B cell (primary cell): ENCODE measurements at regions of chr19 and their contacts with region 1.

Region 1: GRCh38 chr19:41353466-41354342 is at the start of gene TGFB1:
- DNase-seq: peak; percentile 97
- ATAC-seq: peak; percentile 72
- H3K4me3 ChIP-seq: peak within 1 kb of the TSS; percentile 67 to 100 (median 92)
- H3K4me3 Mint-ChIP-seq: peak within 1 kb of the TSS; percentile 93
- H3K27ac ChIP-seq: peak within 1 kb of the TSS; percentile 79 to 91
- H3K27ac Mint-ChIP-seq: peak within 1 kb of the TSS; percentile 92
- H3K4me1 ChIP-seq: peaks cover 26 to 30% of the 10 kb centered on the region in 2 donors
- H3K4me1 Mint-ChIP-seq: peaks cover 44% of the 10 kb centered on the region
- H3K27me3 ChIP-seq: no peaks in the 10 kb centered on the region
- H3K27me3 Mint-ChIP-seq: no peaks in the 10 kb centered on the region
- CTCF ChIP-seq: peak; percentile 84
- total RNA-seq, gene TGFB1: 120 TPM in 2 replicates

Region 2: DNA sequence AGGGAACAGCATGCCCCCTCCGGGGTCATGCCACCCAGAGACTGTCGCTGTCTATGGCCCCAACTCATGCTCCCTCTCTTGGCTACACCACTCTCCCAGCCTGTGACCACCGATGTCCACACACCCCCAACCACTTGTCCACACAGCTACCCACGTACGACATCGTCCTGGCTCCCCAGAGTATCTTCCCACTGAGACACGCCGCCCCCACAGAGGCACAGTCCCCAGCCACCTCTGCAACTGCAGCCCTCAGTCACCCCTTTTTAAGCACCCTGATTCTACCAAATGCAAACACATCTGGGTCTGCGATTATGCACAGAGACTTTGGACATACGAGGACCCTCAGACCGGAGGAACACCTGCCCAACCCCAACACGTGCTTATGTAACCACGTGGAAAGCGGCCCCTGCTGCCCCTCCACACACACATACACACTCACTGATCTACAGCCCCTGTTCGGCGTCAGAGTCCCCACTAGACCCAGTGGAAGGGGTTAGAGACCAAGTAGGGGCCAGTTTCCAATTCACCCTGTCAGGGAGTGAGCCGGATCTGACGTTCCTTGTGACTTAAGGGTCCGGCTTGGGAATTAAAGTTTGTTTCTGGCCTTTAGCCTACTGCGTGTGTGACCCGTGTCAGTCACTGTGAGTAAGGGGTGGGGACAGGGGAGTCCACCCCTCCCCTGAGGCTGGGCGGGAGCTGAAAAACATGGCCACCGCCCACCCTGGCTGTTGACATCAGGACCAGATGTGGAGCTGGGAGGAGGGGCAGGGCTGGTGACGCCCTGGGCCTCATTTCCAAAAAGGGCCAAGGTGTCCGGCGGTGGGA is 146.6 kb before region 1 on chr19:
- CTCF ChIA-PET with region 1: interaction called, 15 read pairs
- POLR2A ChIA-PET with region 1: interaction called, 8 read pairs
- intact Hi-C with region 1: no loop called
- DNase-seq: no peak
- ATAC-seq: no peak
- H3K4me3 ChIP-seq: no peak overlapping the region
- H3K4me3 Mint-ChIP-seq: no peak overlapping the region
- H3K27ac ChIP-seq: no peak overlapping the region
- H3K27ac Mint-ChIP-seq: no peak overlapping the region
- H3K4me1 ChIP-seq: no peaks in the 10 kb centered on the region
- H3K4me1 Mint-ChIP-seq: no peaks in the 10 kb centered on the region
- H3K27me3 ChIP-seq: no peaks in the 10 kb centered on the region
- H3K27me3 Mint-ChIP-seq: no peaks in the 10 kb centered on the region
- CTCF ChIP-seq: no peak

Region 3: GRCh38 chr19:41298348-41298964 is 55.2 kb before region 1 on chr19:
- CTCF ChIA-PET with region 1: interaction called, 7 read pairs
- POLR2A ChIA-PET with region 1: interaction called, 12 read pairs
- intact Hi-C with region 1: loop called (anchors 1 kb)
- DNase-seq: peak; percentile 85
- ATAC-seq: peak; percentile 25
- H3K4me3 ChIP-seq: no peak overlapping the region
- H3K4me3 Mint-ChIP-seq: peak overlapping the region; percentile 86
- H3K27ac ChIP-seq: peak overlapping the region; percentile 83 to 100
- H3K27ac Mint-ChIP-seq: peak overlapping the region; percentile 98
- H3K4me1 ChIP-seq: peaks cover 58 to 65% of the 10 kb centered on the region in 2 donors
- H3K4me1 Mint-ChIP-seq: peaks cover 71% of the 10 kb centered on the region
- H3K27me3 ChIP-seq: no peaks in the 10 kb centered on the region
- H3K27me3 Mint-ChIP-seq: no peaks in the 10 kb centered on the region
- CTCF ChIP-seq: no peak

Region 4: DNA sequence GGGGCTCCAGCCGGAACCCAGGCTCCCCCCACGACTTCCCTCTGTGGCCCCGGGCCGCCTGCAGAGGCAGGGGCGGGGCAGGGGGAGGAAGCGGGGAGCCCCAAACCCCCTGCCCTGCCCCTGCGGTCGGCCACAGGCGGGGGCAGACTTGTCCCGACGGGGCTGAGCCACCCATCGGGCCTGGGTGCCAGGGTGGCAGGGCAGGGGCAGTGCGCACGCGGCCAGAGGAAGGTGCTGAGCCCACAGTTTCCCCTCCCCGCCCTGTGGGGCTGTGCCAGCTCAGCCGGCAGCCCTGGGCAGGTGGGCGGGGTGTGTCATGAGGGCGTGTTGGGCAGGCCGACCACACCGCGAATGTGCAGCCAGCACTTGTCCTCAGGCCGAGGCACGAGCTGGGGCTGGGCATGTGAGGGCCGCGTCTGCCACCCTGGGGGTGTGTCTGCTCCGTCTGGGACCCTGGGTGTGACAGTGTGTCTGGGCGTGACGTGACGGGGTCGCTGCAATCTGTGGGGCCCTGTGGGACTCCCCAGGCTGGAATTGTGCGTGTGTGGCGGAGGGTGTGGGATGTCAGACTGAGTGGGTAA is 26.0 kb before region 1 on chr19:
- CTCF ChIA-PET with region 1: interaction called, 130 read pairs
- POLR2A ChIA-PET with region 1: interaction called, 69 read pairs
- intact Hi-C with region 1: loop called (anchors 1 kb)
- DNase-seq: peak; percentile 90
- ATAC-seq: peak; percentile 78
- H3K4me3 ChIP-seq: peak overlapping the region; percentile 8 to 72 (median 39)
- H3K4me3 Mint-ChIP-seq: peak overlapping the region; percentile 88
- H3K27ac ChIP-seq: peak overlapping the region; percentile 76 to 97
- H3K27ac Mint-ChIP-seq: peak overlapping the region; percentile 98
- H3K4me1 ChIP-seq: peaks cover 59 to 80% of the 10 kb centered on the region in 2 donors
- H3K4me1 Mint-ChIP-seq: peaks cover 72% of the 10 kb centered on the region
- H3K27me3 ChIP-seq: no peaks in the 10 kb centered on the region
- H3K27me3 Mint-ChIP-seq: no peaks in the 10 kb centered on the region
- CTCF ChIP-seq: no peak

Region 5: DNA sequence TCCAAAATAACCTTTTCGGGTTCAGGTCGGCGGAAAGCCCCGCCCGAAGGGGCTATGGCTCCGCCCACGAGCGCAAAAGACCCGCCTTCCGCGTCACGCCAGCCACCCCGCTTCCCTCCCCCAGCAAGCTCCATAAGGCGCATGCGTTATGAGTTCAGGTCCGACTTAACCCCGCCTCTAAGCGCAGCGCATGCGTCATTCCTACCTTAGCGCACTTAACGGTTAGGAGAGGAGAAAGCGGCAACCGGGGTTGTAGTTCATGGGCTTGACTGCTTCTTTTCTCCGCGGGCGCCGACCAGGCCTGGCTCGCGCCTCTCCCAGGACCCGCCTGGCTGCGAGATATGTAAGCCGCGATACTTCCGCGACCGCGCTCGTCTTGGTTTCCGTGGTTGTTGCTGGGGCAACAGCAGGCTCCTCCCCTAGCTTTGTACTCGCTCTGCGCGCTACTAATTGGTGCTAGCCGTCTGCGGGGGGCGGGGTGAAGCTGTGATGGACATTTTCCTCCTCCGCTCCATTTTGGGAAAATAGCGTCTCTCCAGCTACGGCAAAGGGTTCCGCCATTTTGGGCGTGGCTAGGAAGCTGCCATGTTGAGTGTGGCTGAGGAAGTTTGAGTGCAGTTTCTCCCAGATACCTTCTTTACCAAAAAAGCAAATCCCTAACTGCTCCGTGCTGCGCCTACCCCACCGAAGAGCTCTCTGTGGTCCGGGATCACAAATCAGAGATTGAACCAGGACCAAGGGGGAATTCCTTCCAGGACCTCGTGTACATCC is 10.2 kb after region 1 on chr19 and contains the start of gene B9D2:
- CTCF ChIA-PET with region 1: interaction called, 64 read pairs
- POLR2A ChIA-PET with region 1: interaction called, 32 read pairs
- intact Hi-C with region 1: loop called (anchors 1 kb)
- DNase-seq: peak; percentile 99
- ATAC-seq: peak; percentile 92
- H3K4me3 ChIP-seq: peak within 1 kb of the TSS; percentile 75 to 97 (median 86)
- H3K4me3 Mint-ChIP-seq: peak within 1 kb of the TSS; percentile 95
- H3K27ac ChIP-seq: peak within 1 kb of the TSS; percentile 99 to 100
- H3K27ac Mint-ChIP-seq: peak within 1 kb of the TSS; percentile 100
- H3K4me1 ChIP-seq: peaks cover 12 to 24% of the 10 kb centered on the region in 2 donors
- H3K4me1 Mint-ChIP-seq: peaks cover 27% of the 10 kb centered on the region
- H3K27me3 ChIP-seq: no peaks in the 10 kb centered on the region
- H3K27me3 Mint-ChIP-seq: no peaks in the 10 kb centered on the region
- CTCF ChIP-seq: no peak
- total RNA-seq, gene B9D2: 17.5 and 17.8 TPM in 2 replicates

Region 6: DNA sequence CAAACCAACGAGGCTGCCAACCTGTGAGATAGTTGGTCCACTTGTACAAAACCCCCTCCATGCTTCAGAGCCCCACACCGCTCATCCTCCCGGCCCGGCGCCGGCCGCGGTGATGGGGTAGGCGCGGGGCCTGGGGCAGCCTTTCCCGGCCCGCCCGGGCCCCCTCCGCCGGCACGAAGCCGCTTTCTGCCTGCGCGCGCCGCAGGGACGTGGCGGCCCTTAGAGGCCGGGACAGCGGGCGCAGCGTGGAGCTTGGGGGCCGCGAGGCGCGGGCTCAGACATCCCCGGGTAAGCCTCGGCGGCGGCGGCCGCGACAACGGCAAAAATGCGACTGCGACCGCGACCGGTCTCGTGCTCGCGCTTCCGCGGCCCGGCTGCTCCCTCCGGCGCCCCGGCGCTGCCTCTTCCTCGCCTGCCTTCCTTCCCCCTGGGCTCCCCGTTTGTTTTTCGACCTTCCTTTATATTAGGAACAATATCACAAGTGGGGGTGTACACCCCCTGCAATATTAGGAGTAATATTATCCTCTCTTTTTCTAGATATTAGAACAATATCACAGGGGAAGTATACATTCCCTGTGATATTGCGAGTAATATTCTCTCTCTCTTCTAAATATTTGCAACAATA is 168.3 kb after region 1 on chr19:
- CTCF ChIA-PET with region 1: no interaction called
- POLR2A ChIA-PET with region 1: no interaction called
- intact Hi-C with region 1: no loop called
- DNase-seq: peak; percentile 75
- ATAC-seq: peak; percentile 55
- H3K4me3 ChIP-seq: peak overlapping the region; percentile 36 to 57 (median 45)
- H3K4me3 Mint-ChIP-seq: peak overlapping the region; percentile 89
- H3K27ac ChIP-seq: peak overlapping the region; percentile 87 to 88
- H3K27ac Mint-ChIP-seq: peak overlapping the region; percentile 98
- H3K4me1 ChIP-seq: peaks cover 22 to 27% of the 10 kb centered on the region in 2 donors
- H3K4me1 Mint-ChIP-seq: peaks cover 38% of the 10 kb centered on the region
- H3K27me3 ChIP-seq: no peaks in the 10 kb centered on the region
- H3K27me3 Mint-ChIP-seq: no peaks in the 10 kb centered on the region
- CTCF ChIP-seq: no peak